ENCODE measurements at regions of chr12 and their contacts with region 1.

Region 1: GRCh38 chr12:68137335-68137830 is 22.2 kb downstream of the IFNG start:
- DNase-seq: no peak
- CTCF ChIP-seq: no peak

Region 2: GRCh38 chr12:67977668-67978067 is 159.7 kb before region 1 on chr12:
- CTCF ChIA-PET with region 1: no interaction called
- POLR2A ChIA-PET with region 1: no interaction called
- DNase-seq: no peak
- CTCF ChIP-seq: no peak

Region 3: GRCh38 chr12:68119724-68120211 is 17.6 kb before region 1 on chr12:
- CTCF ChIA-PET with region 1: interaction called, 10 read pairs
- POLR2A ChIA-PET with region 1: no interaction called
- DNase-seq: peak; percentile 41
- CTCF ChIP-seq: no peak